ENCODE measurements at regions of chr22 and their contacts with region 1.

Region 1: DNA sequence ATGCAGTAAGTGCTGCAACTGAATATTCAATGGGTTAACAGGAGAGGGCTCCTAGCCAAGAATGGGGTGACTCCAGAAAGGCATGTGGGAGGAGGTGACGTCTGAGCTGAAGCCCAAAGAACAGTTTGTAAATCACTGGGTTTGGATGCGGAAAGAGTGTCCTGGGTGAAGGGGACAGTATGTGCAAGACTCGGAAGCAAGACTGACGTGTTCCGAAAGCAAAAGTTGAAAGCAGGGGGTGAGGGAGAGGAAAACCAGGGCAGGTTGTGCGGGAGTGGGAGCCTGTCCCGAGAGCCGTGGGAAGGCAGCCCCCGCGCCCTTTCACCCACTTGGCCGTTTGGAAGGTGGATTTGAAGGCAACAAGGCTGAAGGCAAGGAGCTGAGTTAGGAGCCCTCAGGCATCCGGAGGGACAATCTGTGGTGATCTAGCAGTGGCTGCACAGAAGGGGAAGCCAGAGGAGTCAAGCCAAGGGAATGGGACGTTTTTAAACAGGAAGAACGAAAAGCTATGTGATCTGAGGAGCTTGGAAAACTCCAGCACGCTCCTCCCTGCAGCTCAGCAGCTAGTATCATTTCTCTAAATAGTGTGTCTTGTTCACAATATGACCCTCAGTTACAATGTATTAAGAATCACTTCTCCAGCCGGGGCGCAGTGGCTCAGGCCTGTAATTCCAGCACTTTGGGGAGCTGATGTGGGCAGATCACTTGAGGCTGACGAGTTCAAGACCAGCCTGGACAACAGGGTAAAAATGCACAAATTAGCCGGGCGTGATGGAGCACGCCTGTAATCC is 7.7 kb downstream of the SLC25A18 start:
- DNase-seq: no peak

Region 2: GRCh38 chr22:17190702-17191101 is 380.3 kb before region 1 on chr22:
- intact Hi-C with region 1: no loop called
- DNase-seq: no peak

Region 3: GRCh38 chr22:17726464-17727246 is 155.6 kb after region 1 on chr22:
- intact Hi-C with region 1: loop called (anchors 10 kb)
- DNase-seq: no peak